ENCODE measurements at regions of chr19 and their contacts with region 1.

Region 1: GRCh38 chr19:38514812-38515633 is 81.5 kb downstream of the RYR1 start:
- DNase-seq: peak; percentile 27
- ATAC-seq: peak; percentile 97
- H3K4me3 ChIP-seq: no peak overlapping the region
- H3K27ac ChIP-seq: no peak overlapping the region
- H3K4me1 ChIP-seq: peaks cover 2 to 9% of the 10 kb centered on the region in 2 experiments; a peak in 2 of 4 replicates
- H3K27me3 ChIP-seq: no peaks in the 10 kb centered on the region
- CTCF ChIP-seq: peak; percentile 74 to 91 (median 84)
- POLR2A ChIP-seq: no peak
- RAD21 ChIP-seq: peak; percentile 89

Region 2: GRCh38 chr19:38527466-38528136 is 12.6 kb after region 1 on chr19:
- CTCF ChIA-PET with region 1: no interaction called
- POLR2A ChIA-PET with region 1: no interaction called
- RAD21 ChIA-PET with region 1: no interaction called
- intact Hi-C with region 1: no loop called
- DNase-seq: no peak
- ATAC-seq: peak; percentile 60
- H3K4me3 ChIP-seq: no peak overlapping the region
- H3K27ac ChIP-seq: no peak overlapping the region
- H3K4me1 ChIP-seq: no peaks in the 10 kb centered on the region
- H3K27me3 ChIP-seq: no peaks in the 10 kb centered on the region
- CTCF ChIP-seq: no peak
- POLR2A ChIP-seq: no peak
- RAD21 ChIP-seq: no peak

Region 3: DNA sequence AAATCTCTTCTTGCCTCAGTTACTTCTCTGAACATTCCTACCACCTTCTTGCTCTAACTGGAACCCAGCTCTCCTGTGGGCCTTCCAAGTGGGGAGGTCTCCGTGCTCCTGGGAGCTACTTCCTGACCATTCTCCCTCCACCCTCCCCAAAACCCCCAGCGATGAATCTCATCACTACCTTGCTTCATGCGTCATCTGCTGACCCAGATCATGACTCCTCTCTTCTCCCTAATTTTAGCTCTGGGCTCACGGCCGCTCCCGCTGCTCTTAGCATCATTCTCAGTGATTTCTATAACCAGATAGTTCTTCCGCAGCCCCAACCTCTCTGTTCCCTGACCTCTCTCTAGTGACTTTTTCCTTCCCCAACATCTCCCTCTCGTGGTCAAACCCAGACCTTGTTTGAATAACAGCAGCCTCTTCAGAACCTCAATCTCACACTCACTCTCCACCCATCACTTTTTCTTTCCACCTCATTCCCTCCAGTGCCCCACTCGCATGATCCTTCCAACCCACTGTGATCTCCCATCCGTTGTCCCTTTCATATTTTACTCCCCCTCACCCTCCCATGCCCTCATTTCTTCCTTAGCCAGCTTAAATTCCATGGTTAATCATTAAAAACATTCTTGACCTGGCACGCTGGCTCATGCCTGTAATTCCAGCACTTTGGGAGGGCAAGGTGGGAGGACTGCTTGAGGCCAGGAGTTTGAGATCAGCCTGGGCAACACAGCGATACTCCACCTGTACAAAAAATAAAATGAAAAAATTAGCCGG is 437.6 kb after region 1 on chr19:
- CTCF ChIA-PET with region 1: no interaction called
- POLR2A ChIA-PET with region 1: no interaction called
- RAD21 ChIA-PET with region 1: no interaction called
- intact Hi-C with region 1: loop called (anchors 1 kb)
- DNase-seq: no peak
- ATAC-seq: peak; percentile 87
- H3K4me3 ChIP-seq: no peak overlapping the region
- H3K27ac ChIP-seq: no peak overlapping the region
- H3K4me1 ChIP-seq: peaks cover 3 to 10% of the 10 kb centered on the region in 2 experiments
- H3K27me3 ChIP-seq: no peaks in the 10 kb centered on the region
- CTCF ChIP-seq: peak; percentile 38 to 48 (median 45); a peak in 5 of 6 replicates
- POLR2A ChIP-seq: no peak
- RAD21 ChIP-seq: peak; percentile 73

Measured in HCT116 (cell line).